Activated CD4-positive, alpha-beta memory T cell treated with anti-CD3 and anti-CD28 coated beads for 36 hours (primary cell): ENCODE measurements at regions of chr14 and their contacts with region 1.

Region 1: DNA sequence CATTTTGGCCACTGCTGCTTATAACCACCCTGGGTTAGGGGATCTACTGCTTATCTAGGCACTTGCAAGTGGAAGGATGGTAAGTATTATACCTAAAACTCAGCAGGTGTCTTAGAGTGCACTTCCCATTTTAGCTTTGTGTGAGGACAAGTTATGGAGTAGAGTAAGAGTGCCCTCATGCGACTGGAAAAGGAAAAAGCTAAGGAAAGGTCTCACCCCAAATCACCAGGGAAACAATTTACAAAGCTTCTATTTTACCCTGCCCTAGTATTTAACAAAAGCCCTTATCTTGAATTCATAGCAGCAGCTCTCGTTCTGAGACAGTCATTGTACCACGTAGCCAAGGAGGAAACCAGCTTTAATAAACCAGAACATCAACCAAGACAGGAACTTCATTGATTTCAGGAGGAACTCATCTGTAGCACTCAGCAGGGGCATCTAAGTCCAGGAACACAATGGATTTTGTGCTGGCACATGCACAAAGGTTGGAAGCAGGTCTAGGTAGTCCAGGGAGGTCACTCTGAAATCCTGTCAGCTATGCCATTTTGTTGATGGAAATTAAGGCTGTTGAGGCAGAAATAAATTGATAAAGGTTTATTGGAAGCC is 2.9 kb downstream of the RDH12 start:
- DNase-seq: peak; percentile 24
- H3K4me3 Mint-ChIP-seq: no peak overlapping the region
- H3K27ac Mint-ChIP-seq: no peak overlapping the region
- H3K4me1 Mint-ChIP-seq: peaks cover 2% of the 10 kb centered on the region
- H3K27me3 Mint-ChIP-seq: peaks cover 3% of the 10 kb centered on the region

Region 2: GRCh38 chr14:67426983-67427606 is 277.5 kb before region 1 on chr14:
- CTCF ChIA-PET with region 1: interaction called, 82 read pairs
- POLR2A ChIA-PET with region 1: no interaction called
- intact Hi-C with region 1: loop called (anchors 5 kb)
- DNase-seq: peak; percentile 80
- H3K4me3 Mint-ChIP-seq: no peak overlapping the region
- H3K27ac Mint-ChIP-seq: no peak overlapping the region
- H3K4me1 Mint-ChIP-seq: peaks cover 3% of the 10 kb centered on the region
- H3K27me3 Mint-ChIP-seq: peaks cover 22% of the 10 kb centered on the region

Region 3: DNA sequence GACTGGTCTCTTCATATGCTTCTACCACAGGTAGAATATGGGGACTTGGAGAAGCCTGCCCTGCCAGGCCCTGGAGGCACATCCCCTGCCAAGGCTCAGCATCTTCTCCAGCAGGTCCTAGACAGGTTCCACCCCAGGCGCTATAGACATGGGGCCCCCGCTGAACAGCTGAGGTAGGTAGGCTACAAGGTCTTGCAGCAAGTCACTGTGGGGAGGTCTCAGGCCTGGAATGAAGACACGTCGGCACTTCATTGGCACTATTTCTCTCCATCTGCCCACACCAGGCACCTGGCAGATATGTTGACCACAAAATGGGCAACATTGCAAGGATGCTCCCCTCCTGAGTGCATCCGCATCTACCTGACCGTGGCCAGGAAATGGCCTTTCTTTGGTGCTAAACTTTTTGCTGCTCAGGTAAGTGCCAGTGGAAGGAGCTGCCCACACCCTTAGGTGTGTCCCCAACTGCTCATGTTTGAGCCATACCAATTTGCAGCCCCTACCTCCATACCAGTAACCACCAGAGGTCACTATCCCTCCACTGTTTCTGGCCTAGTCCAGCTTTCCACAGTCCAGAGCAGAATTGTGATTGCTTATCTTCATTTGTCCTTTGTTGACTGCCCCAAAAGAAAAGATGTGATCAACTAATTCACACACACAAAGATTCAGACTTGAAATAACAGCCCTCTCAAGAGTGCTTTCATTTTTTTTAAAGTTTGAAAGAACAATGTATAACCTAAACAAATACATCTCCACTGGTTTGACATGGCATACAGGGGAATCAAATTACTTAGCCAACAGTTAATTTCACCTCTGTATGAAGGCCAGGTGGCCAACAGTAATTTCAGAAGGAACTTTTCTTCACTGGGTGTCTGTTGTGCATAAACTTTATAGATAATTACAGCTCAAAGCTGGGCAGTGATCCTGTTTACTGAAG is 120.6 kb before region 1 on chr14:
- CTCF ChIA-PET with region 1: interaction called, 99 read pairs
- POLR2A ChIA-PET with region 1: no interaction called
- intact Hi-C with region 1: loop called (anchors 1 kb)
- DNase-seq: peak; percentile 32
- H3K4me3 Mint-ChIP-seq: no peak overlapping the region
- H3K27ac Mint-ChIP-seq: no peak overlapping the region
- H3K4me1 Mint-ChIP-seq: no peaks in the 10 kb centered on the region
- H3K27me3 Mint-ChIP-seq: no peaks in the 10 kb centered on the region

Region 4: DNA sequence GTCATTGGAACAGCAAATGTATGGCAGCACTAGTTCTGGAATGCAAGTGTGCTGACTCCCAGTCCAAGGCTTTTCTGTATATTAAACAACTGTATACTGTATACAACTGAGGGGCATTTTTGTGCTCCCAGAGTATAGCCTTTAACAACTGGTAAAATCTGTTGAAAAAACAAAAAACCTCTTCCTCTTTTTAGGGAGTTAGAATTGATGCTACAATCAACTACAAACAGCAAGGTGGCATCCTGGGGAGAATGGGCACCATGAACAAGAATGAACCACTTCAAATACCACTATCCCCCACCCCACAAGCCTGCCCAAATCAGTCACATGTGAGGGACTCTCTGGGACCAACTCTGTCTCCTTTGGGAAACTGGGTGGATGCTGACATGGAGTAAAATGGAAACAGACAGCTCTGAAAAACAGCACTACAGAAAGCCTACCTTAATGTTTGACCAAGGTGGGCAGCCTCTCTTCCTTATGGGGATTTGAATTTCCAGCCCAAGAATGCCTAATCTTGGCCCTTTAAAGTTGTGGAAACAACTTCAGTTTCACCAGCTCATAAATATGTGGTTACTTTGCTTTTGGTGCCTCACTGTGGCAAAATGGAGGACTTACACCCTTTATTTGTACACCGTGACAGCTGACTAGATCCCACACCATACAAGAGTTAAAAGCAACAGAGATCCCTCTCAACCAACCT is 37.7 kb before region 1 on chr14:
- CTCF ChIA-PET with region 1: interaction called, 73 read pairs
- POLR2A ChIA-PET with region 1: interaction called, 3 read pairs
- intact Hi-C with region 1: loop called (anchors 5 kb)
- DNase-seq: peak; percentile 20
- H3K4me3 Mint-ChIP-seq: no peak overlapping the region
- H3K27ac Mint-ChIP-seq: no peak overlapping the region
- H3K4me1 Mint-ChIP-seq: peaks cover 56% of the 10 kb centered on the region
- H3K27me3 Mint-ChIP-seq: no peaks in the 10 kb centered on the region

Region 5: DNA sequence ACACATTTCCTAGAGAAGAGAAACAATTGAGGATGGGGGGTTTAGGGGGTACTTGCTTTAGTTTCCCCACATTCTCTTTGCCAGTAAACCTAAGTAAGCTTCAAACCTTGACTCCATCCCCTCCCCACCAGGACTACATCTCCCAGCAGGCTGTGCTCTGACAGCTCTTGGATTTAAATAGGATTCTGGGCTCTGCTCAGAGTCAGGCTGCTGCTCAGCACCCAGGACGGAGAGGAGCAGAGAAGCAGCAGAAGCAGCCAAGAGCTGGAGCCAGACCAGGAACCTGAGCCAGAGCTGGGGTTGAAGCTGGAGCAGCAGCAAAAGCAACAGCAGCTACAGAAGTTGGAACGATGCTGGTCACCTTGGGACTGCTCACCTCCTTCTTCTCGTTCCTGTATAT is 17.7 kb after region 1 on chr14:
- CTCF ChIA-PET with region 1: interaction called, 13 read pairs
- POLR2A ChIA-PET with region 1: no interaction called
- intact Hi-C with region 1: no loop called
- DNase-seq: no peak
- H3K4me3 Mint-ChIP-seq: no peak overlapping the region
- H3K27ac Mint-ChIP-seq: no peak overlapping the region
- H3K4me1 Mint-ChIP-seq: peaks cover 7% of the 10 kb centered on the region
- H3K27me3 Mint-ChIP-seq: peaks cover 32% of the 10 kb centered on the region